Ovary (tissue), 10 donors: ENCODE measurements at regions of chr1 and their contacts with region 1.

Region 1: DNA sequence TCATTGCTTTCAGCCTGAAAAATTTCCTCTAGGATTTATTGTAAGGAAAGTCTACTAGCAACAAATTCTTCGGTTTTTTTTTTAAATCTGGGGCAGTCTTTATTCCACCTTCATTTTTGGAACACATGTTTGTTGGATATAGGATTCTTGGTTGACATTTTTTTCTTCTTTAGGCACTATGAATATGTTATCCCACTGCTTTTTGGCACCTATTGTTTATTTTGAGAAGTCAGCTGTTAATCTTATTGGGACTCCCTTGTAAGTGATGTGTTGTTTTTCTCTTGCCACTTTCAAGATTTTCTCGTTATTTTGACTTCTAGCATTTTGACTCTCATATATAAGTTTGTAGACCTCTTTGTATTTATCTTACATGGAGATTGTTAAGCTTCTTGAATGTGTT is 99.3 kb downstream of the NPHS2 start:
- DNase-seq: no peak
- H3K4me3 ChIP-seq: no peak overlapping the region
- H3K27ac ChIP-seq: no peak overlapping the region
- H3K4me1 ChIP-seq: no peaks in the 10 kb centered on the region
- H3K27me3 ChIP-seq: no peaks in the 10 kb centered on the region
- CTCF ChIP-seq: no peak
- EP300 ChIP-seq: no peak
- POLR2A ChIP-seq: no peak

Region 2: DNA sequence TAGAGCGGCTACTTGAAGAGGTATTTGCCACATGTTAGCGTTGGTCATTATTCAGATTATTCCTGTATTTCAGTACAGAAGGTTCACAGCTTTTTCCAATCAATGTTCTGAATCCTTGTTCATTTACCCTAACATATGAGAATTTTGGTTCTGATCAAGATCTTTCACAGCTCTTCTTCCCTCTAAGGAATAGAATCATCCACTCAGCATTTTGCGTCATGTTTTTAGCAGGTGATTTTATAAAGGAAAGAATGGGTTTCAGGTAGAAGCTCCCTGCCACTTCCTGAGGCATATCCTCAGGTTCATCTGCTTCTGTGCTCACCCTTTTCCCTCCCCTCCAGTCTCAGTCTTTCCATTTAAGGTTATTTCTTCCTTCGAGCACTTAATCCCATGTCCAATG is 32.9 kb after region 1 on chr1:
- intact Hi-C with region 1: loop called in 1 of 4 experiments (anchors 2 kb)
- DNase-seq: no peak
- H3K4me3 ChIP-seq: no peak overlapping the region
- H3K27ac ChIP-seq: no peak overlapping the region
- H3K4me1 ChIP-seq: no peaks in the 10 kb centered on the region
- H3K27me3 ChIP-seq: no peaks in the 10 kb centered on the region
- CTCF ChIP-seq: no peak
- EP300 ChIP-seq: no peak
- POLR2A ChIP-seq: no peak